Heart right ventricle (tissue), 16 donors: ENCODE measurements at regions of chr12 and their contacts with region 1.

Region 1: DNA sequence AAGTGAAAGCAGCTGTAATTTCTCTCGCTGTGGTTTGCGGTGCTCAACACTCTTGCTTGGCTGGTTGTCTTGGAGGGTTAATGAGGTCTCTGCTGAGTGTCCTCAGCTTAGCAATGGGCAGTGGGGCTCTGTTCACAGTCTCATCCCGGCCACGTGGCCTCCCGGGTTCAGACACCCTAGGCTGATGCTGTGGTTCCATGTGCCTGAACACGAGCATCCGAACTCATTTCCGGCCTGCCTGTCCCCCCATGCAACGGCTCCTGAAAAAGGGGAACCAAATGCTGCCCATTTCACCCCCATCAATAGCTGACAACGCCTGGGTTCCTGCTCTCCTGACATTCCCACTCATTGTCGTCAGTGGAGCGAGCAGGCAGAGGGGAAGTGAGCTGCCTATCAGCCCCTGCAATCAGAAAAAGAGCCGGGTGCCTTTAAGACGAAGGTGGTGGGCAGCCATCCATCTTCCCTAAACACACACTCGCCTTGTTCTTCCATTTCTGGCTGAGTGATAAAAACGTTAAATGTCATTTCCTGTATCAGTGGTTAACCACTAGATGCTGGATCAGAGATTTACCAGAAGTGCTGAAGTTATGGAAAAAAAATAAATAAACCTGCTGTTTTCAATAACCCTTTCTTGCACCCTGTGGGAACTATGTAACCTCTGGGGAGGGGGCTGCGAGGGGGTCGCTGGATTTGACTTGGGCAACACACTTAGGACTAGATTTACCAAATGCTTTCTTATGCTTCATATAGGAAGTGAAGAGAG is 60.3 kb upstream of the BCL2L14 start:
- DNase-seq: peak; percentile 41 to 62
- ATAC-seq: peak; percentile 61 to 87 (median 76)
- H3K4me3 ChIP-seq: peak overlapping the region in 5 of 10 donors; percentile 3 to 31 (median 22)
- H3K27ac ChIP-seq: peak overlapping the region in 6 of 10 donors; percentile 31 to 88 (median 51)
- H3K4me1 ChIP-seq: peaks cover 0 to 55% (median 3%) of the 10 kb centered on the region in 9 donors
- H3K27me3 ChIP-seq: no peaks in the 10 kb centered on the region
- CTCF ChIP-seq: no peak

Region 2: GRCh38 chr12:11621797-11622423 is 388.5 kb before region 1 on chr12:
- intact Hi-C with region 1: loop called in 1 of 10 experiments (anchors 10 kb)
- DNase-seq: peak in 1 of 2 donors; percentile 20
- ATAC-seq: peak in 1 of 8 donors; percentile 37
- H3K4me3 ChIP-seq: no peak overlapping the region
- H3K27ac ChIP-seq: no peak overlapping the region
- H3K4me1 ChIP-seq: peaks cover 0 to 17% (median 0%) of the 10 kb centered on the region in 9 donors
- H3K27me3 ChIP-seq: no peaks in the 10 kb centered on the region
- CTCF ChIP-seq: peak in 8 of 9 donors; percentile 18 to 60 (median 42)

Region 3: DNA sequence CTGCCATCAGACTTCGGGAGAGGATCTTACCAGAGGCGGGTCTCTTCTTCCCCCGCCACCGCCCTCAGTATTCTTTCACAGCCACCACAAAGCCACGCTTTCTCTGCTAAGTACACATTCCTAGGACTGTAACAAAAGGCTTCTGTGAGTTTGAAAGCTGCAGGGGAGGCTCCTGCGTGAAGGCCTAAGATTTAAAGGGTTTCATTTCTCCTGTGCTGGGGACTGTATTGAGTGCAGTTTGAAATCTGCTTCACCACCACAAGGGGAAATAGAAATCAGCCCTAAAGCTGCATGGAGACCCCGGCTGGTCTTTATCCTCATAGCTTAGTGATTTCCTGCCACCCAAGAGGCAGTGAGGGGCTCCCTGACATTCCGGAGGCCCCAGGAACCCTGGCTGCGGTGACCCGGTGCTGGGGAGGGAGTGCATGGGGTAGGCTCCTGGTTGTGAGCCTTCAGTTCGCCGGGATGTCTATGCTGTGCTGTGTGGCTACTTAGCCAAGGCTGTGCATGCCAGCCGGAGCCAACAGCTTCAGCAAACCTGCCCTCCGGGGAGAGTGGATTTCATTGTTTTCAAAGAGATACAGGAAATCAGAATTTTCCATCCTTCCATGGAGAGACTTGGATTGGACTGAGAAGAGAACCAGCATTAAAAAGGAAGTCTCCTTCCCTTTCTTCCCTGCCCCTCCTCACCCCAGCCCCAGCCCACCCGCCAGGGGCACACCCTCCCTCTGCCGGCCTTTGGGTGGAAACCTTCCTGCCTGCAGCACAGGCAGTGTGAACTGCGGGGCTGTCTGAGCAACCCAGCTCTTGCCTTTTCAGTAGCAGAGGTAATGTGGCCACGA is 197.7 kb before region 1 on chr12:
- intact Hi-C with region 1: loop called in 1 of 10 experiments (anchors 10 kb)
- DNase-seq: peak; percentile 39 to 53
- ATAC-seq: peak; percentile 50 to 84 (median 78)
- H3K4me3 ChIP-seq: peak overlapping the region in 7 of 10 donors; percentile 21 to 40 (median 34)
- H3K27ac ChIP-seq: peak overlapping the region; percentile 62 to 91 (median 78)
- H3K4me1 ChIP-seq: peaks cover 24 to 71% (median 52%) of the 10 kb centered on the region in 9 donors
- H3K27me3 ChIP-seq: no peaks in the 10 kb centered on the region
- CTCF ChIP-seq: peak in 6 of 9 donors; percentile 13 to 34 (median 30)

Region 4: GRCh38 chr12:11836282-11837151 is 173.9 kb before region 1 on chr12:
- intact Hi-C with region 1: loop called in 1 of 10 experiments (anchors 10 kb)
- DNase-seq: peak in 1 of 2 donors; percentile 31
- ATAC-seq: peak in 7 of 8 donors; percentile 14 to 59 (median 37)
- H3K4me3 ChIP-seq: no peak overlapping the region
- H3K27ac ChIP-seq: peak overlapping the region in 4 of 10 donors; percentile 9 to 89 (median 78)
- H3K4me1 ChIP-seq: peaks cover 20 to 96% (median 74%) of the 10 kb centered on the region in 9 donors
- H3K27me3 ChIP-seq: no peaks in the 10 kb centered on the region
- CTCF ChIP-seq: no peak

Region 5: DNA sequence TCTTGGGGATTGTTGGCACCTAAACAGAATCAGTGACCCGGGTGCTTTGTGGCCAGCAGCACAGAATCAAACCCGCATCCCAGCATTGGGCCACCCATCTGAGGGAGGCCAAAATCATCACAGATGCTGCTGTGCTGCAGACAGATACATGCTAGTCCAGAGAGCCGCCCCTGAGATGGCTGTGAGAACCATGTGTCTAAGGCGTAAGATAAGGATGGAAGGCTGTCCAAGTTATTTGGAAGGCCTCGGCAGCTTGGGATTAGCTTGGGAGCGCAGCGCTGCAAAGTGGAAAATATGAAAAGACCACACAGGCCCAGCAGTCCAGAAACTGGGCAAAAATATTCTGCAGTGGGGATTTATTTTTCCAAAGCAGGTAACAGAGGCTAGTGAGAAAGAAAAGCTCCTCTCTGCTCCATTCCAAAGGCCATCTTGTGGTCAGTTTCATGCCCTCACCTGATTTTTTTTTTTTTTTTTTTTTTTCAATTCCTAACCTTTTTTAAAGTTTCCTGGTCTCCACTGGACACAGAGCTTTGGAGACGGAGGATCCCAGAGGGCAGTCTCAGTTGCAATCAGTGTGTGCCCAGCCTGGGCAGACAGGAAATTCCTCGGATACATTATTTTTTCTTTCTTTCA is 118.6 kb before region 1 on chr12:
- intact Hi-C with region 1: loop called in 1 of 10 experiments (anchors 10 kb)
- DNase-seq: peak in 1 of 2 donors; percentile 57
- ATAC-seq: peak; percentile 75 to 92 (median 88)
- H3K4me3 ChIP-seq: no peak overlapping the region
- H3K27ac ChIP-seq: peak overlapping the region in 6 of 10 donors; percentile 12 to 66 (median 30)
- H3K4me1 ChIP-seq: peaks cover 0 to 31% (median 11%) of the 10 kb centered on the region in 9 donors
- H3K27me3 ChIP-seq: no peaks in the 10 kb centered on the region
- CTCF ChIP-seq: peak in 8 of 9 donors; percentile 17 to 58 (median 44)